Left cardiac atrium (tissue), 4 donors: ENCODE measurements at regions of chr7 and their contacts with region 1.

Region 1: DNA sequence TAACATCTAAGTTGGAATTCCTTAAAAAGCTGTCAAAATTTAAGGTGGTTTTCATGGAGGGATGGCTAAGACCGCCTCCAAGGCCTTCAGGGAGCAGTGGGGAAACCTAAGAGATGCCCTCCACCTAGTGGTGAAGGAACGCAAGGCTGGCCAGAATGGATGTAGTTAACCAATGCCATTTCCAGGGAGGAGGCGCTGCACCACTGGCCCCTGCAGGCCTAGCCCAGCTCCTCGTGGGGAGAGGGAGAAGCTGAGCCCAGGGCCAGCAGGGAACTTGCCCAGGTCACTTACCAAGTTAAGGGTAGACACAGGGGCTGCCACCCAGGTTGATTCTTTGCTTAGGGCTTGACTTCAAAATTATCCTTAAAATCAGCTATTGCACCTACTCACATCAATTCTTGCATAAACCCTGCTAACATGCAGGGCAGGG is 32.0 kb downstream of the FIGNL1 start:
- DNase-seq: peak; percentile 73
- ATAC-seq: peak; percentile 94 to 95

Region 2: DNA sequence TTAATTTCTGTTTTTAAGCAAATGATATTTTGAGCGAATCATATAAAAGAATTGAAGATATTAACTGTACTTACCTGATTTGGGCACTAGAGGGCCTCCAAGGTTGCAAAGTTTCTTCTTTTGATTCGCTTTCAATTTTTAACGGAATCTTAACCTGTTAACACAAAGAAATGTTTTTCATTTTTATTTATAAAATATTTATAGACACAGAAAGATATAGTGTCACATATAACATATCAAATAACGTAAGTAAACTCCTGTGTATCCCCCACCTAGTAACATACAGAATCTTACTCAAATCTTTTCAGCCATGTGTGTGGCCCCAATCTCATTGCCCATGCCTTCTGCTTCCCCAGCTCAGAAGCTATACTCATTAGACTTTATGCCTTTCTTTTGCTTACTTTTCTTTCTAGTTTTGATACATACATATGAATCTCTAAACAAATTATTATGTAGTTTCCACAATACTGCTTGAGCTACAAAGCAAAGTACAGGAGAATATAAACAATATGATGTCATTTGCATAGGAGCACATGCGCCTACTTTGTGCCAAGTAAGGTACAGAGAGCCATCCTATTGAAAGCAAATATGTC is 275.6 kb before region 1 on chr7:
- intact Hi-C with region 1: loop called (anchors 2 to 10 kb)
- DNase-seq: no peak
- ATAC-seq: no peak

Region 3: GRCh38 chr7:50206453-50207250 is 211.4 kb before region 1 on chr7:
- intact Hi-C with region 1: loop called (anchors 5 kb)
- DNase-seq: peak; percentile 39
- ATAC-seq: peak; percentile 32 to 54

Region 4: GRCh38 chr7:50475340-50475739 is 57.2 kb after region 1 on chr7:
- intact Hi-C with region 1: no loop called
- DNase-seq: no peak
- ATAC-seq: no peak